Transverse colon (tissue), 4 donors: ENCODE measurements at regions of chr1 and their contacts with region 1.

Region 1: DNA sequence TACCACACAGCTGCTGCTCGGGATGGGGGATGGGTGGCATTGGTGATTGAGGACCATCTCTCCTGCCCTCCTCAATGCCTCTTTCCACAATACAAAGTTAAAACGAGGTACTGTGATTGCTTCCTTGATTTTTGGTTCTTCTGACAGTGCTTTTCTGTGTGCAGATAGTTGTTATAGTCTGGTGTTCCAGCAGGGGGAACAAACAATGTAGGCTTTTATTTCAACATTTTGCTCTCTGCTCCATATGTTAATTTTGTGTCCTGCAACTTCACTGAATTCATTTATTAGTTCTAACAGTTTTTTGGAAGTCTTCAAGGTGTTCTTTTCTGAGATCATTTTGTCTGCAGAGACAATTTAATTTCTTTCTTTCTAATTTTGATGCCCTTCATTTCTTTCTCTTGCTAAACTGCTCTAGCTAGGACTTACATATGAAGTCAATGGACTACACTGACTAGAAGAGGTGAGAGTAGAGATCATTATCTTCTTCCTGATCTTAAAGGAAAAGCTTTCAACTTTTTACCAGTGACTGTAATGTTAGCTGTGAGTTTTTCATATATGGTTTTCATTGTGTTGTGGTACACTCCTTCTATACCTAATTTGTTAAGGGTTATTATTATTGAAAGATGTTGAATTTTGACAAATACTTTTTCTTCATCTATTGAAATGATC is 45.4 kb downstream of the TNFSF18 start:
- DNase-seq: no peak
- H3K4me3 ChIP-seq: no peak overlapping the region
- H3K27ac ChIP-seq: no peak overlapping the region
- H3K4me1 ChIP-seq: no peaks in the 10 kb centered on the region
- H3K27me3 ChIP-seq: no peaks in the 10 kb centered on the region
- CTCF ChIP-seq: no peak
- EP300 ChIP-seq: no peak
- POLR2A ChIP-seq: no peak

Region 2: GRCh38 chr1:172845371-172845770 is 160.0 kb before region 1 on chr1:
- in situ Hi-C with region 1: no loop called
- intact Hi-C with region 1: no loop called
- DNase-seq: no peak
- H3K4me3 ChIP-seq: no peak overlapping the region
- H3K27ac ChIP-seq: no peak overlapping the region
- H3K4me1 ChIP-seq: peaks cover 0 to 9% (median 0%) of the 10 kb centered on the region in 4 donors
- H3K27me3 ChIP-seq: no peaks in the 10 kb centered on the region
- CTCF ChIP-seq: no peak
- EP300 ChIP-seq: no peak
- POLR2A ChIP-seq: no peak

Region 3: GRCh38 chr1:172964864-172965263 is 40.5 kb before region 1 on chr1:
- in situ Hi-C with region 1: no loop called
- intact Hi-C with region 1: loop called (anchors 1 kb)
- DNase-seq: no peak
- H3K4me3 ChIP-seq: no peak overlapping the region
- H3K27ac ChIP-seq: no peak overlapping the region
- H3K4me1 ChIP-seq: peaks cover 5 to 14% (median 9%) of the 10 kb centered on the region in 4 donors
- H3K27me3 ChIP-seq: no peaks in the 10 kb centered on the region
- CTCF ChIP-seq: no peak
- EP300 ChIP-seq: no peak
- POLR2A ChIP-seq: no peak